ENCODE measurements at regions of chr18 and their contacts with region 1.

Region 1: DNA sequence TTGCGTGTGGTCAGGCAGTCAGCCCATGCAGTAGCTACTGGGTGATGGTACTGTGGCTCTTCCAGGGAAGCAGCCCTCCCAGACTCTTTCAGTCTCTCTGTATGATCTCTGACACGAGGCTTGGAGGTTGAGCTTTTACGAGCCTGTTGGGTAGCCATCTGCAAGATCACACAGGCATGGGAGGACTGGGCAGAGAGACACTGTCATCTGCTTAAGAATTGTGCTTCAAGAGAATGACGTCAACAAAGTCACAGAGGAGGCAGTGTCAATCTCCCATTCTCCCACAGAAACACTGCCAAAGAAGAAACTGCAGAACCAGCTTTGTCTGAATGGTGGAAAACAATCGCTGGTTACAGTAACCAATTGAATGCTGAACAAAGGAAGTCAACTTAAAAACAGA is 78.4 kb upstream of the MC2R start:
- DNase-seq: no peak
- H3K4me3 ChIP-seq: no peak overlapping the region
- H3K27ac ChIP-seq: no peak overlapping the region
- H3K4me1 ChIP-seq: no peaks in the 10 kb centered on the region
- H3K27me3 ChIP-seq: no peaks in the 10 kb centered on the region
- CTCF ChIP-seq: no peak
- POLR2A ChIP-seq: no peak

Region 2: DNA sequence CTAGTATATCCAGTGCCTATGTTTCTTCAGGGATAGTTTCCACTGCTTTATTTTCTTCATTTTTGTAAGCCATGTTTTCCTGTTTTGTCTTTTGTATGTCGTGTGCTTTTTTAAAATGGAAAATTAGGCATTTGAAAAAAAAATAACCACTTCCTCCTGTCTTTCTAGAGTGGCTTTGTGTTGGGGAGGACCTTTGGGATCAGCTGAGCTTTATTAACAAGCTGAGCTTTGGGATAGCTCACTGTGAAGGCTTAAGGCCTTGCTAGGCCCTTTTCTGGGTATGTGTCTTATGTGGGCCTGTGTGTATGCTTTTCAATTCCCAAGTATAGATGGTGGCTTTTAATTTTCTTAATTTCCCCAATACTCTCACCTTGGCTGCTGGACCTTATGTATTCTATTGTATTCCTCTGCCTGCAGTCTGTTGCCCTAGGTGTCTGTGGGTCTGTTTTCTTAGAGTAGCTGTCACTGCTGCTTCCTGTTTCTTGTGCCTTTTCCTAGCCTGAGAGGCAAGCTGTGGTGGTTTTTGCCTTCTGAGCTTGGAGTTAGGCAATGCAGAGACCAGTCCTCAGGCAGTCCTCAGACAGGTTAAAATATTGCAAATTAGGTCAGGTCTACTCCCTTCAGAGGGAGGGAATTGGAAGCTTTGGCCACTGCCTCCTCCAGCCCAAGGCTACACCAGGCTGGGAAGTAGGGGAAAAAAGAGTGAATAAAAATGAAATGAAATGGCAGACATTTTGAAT is 640.5 kb before region 1 on chr18:
- intact Hi-C with region 1: no loop called
- DNase-seq: no peak
- H3K4me3 ChIP-seq: no peak overlapping the region
- H3K27ac ChIP-seq: peak overlapping the region; percentile 34 to 40
- H3K4me1 ChIP-seq: no peaks in the 10 kb centered on the region
- H3K27me3 ChIP-seq: no peaks in the 10 kb centered on the region
- CTCF ChIP-seq: no peak
- POLR2A ChIP-seq: no peak

Region 3: DNA sequence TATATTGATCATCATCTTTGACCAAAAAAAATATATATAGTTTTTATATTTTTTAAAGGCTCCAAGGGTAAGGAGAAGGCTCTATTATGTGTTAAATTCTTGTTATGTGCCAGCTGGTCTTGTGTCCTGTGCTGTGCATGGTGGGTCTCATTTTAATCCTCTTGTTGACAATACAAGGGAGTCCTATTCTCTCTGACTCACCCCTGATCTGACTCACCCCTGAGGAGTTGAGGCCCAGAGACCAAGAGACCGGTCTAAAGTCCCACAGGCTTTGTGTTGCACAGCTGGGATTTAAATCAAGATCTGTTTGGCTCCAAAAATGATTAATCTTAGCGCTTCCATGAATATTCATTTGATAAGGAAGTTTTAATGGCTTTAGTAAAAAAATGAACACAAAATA is 104.1 kb before region 1 on chr18:
- intact Hi-C with region 1: loop called (anchors 10 kb)
- DNase-seq: no peak
- H3K4me3 ChIP-seq: no peak overlapping the region
- H3K27ac ChIP-seq: no peak overlapping the region
- H3K4me1 ChIP-seq: no peaks in the 10 kb centered on the region
- H3K27me3 ChIP-seq: peaks cover 0 to 4% of the 10 kb centered on the region in 2 donors
- CTCF ChIP-seq: no peak
- POLR2A ChIP-seq: no peak

Region 4: GRCh38 chr18:13932285-13933025 is 61.3 kb before region 1 on chr18:
- intact Hi-C with region 1: no loop called
- DNase-seq: no peak
- H3K4me3 ChIP-seq: no peak overlapping the region
- H3K27ac ChIP-seq: no peak overlapping the region
- H3K4me1 ChIP-seq: no peaks in the 10 kb centered on the region
- H3K27me3 ChIP-seq: no peaks in the 10 kb centered on the region
- CTCF ChIP-seq: no peak
- POLR2A ChIP-seq: no peak

Region 5: DNA sequence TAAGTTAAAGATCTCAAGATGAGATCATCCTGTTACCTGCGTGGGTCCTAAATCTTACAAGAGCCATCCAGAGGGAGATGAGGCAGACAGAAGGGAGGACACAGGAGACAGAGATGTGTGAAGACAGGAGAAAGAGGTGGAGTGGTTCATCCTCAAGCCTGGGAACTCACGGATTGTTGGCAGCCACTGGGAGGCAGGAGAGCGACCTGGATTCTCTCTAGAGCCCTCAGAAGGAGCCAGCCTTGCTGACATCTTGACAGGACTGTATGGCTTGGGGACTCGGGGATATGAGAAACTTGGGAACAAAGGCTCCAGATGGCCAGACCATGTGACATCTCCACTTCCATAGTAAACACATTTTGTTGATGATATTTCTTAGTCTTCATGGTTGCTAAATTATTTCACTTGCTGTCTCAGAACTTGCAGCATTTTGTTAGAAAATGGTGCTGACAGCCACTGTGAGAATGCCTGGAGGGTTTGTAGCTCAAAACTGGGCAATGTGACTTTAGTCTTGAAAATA is 20.6 kb before region 1 on chr18:
- intact Hi-C with region 1: no loop called
- DNase-seq: no peak
- H3K4me3 ChIP-seq: no peak overlapping the region
- H3K27ac ChIP-seq: no peak overlapping the region
- H3K4me1 ChIP-seq: no peaks in the 10 kb centered on the region
- H3K27me3 ChIP-seq: no peaks in the 10 kb centered on the region
- CTCF ChIP-seq: no peak
- POLR2A ChIP-seq: no peak

Measured in breast epithelium (tissue), 4 donors.